Thyroid gland (tissue), 4 donors: ENCODE measurements at regions of chr10 and their contacts with region 1.

Region 1: GRCh38 chr10:110547139-110547761 is 20.2 kb upstream of the SMC3 start:
- DNase-seq: no peak
- H3K4me3 ChIP-seq: no peak overlapping the region
- H3K27ac ChIP-seq: no peak overlapping the region
- H3K4me1 ChIP-seq: no peaks in the 10 kb centered on the region
- H3K27me3 ChIP-seq: no peaks in the 10 kb centered on the region
- CTCF ChIP-seq: peak; percentile 56 to 82 (median 76)
- POLR2A ChIP-seq: no peak

Region 2: DNA sequence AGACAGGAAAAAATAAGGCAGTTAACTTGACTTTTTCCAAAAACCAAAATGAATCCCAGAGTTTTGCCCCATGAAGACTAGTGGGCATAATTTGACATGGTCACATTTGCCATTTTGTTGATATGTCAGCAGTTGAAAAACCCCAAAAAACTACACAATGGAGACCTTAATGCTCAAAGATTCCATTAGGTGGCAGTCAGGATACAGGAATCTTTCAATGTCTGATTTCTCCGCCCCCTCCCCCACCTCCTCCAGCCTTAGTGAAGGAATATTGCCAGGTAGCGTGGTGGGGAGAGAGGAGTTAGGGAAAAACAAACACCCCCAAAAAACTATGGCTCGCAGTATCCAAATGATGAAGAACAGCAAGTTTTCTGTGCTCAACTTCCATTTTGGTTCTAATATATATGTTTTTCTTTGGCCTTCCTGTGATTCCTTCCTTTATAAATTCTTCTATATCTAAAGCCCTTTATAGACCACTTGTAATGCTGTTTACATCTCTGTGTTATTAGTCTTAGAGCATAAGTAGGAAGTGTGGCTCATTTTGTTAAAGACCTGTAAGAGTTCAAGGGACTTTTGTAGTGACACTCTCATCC is 235.8 kb before region 1 on chr10:
- intact Hi-C with region 1: loop called (anchors 2 kb)
- DNase-seq: peak; percentile 65 to 67
- H3K4me3 ChIP-seq: no peak overlapping the region
- H3K27ac ChIP-seq: no peak overlapping the region
- H3K4me1 ChIP-seq: no peaks in the 10 kb centered on the region
- H3K27me3 ChIP-seq: no peaks in the 10 kb centered on the region
- CTCF ChIP-seq: peak; percentile 31 to 85 (median 72)
- POLR2A ChIP-seq: no peak

Region 3: GRCh38 chr10:110354322-110354766 is 192.9 kb before region 1 on chr10:
- intact Hi-C with region 1: loop called (anchors 5 kb)
- DNase-seq: peak; percentile 82 to 87
- H3K4me3 ChIP-seq: no peak overlapping the region
- H3K27ac ChIP-seq: no peak overlapping the region
- H3K4me1 ChIP-seq: peaks cover 10 to 41% of the 10 kb centered on the region in 2 donors
- H3K27me3 ChIP-seq: no peaks in the 10 kb centered on the region
- CTCF ChIP-seq: peak; percentile 39 to 69 (median 52)
- POLR2A ChIP-seq: no peak